ENCODE measurements at regions of chr6 and their contacts with region 1.

Region 1: DNA sequence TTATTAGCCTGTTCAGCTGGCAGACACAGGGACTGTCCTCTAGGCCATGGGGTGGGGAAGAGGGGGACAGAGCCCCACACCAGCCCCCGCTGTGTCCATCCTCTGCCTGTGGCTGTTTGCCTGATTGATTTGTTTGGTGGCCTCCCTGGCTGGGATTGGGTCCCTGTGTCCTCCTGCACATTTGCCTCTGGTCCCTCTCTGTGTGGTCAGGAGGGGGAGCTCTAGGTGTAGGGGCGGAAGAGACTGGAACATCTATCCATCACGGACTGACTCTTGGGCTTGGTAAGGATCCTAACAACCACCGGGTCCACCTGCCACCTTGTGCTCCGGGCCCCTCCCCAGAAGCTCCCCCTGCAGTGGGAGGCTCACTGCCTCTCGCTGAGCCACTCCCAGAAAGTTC is 38.4 kb upstream of the CCDC167 start:
- DNase-seq: peak; percentile 63
- ATAC-seq: peak; percentile 56
- H3K4me3 Mint-ChIP-seq: peak overlapping the region; percentile 8; the same call in 1 of the 2 replicates
- H3K27ac Mint-ChIP-seq: no peak overlapping the region
- H3K4me1 Mint-ChIP-seq: peaks cover 37% of the 10 kb centered on the region
- H3K27me3 Mint-ChIP-seq: peaks cover 59% of the 10 kb centered on the region
- CTCF ChIP-seq: 0 out of 2 replicates have a peak, but pooled peaks have one; percentile 20

Region 2: DNA sequence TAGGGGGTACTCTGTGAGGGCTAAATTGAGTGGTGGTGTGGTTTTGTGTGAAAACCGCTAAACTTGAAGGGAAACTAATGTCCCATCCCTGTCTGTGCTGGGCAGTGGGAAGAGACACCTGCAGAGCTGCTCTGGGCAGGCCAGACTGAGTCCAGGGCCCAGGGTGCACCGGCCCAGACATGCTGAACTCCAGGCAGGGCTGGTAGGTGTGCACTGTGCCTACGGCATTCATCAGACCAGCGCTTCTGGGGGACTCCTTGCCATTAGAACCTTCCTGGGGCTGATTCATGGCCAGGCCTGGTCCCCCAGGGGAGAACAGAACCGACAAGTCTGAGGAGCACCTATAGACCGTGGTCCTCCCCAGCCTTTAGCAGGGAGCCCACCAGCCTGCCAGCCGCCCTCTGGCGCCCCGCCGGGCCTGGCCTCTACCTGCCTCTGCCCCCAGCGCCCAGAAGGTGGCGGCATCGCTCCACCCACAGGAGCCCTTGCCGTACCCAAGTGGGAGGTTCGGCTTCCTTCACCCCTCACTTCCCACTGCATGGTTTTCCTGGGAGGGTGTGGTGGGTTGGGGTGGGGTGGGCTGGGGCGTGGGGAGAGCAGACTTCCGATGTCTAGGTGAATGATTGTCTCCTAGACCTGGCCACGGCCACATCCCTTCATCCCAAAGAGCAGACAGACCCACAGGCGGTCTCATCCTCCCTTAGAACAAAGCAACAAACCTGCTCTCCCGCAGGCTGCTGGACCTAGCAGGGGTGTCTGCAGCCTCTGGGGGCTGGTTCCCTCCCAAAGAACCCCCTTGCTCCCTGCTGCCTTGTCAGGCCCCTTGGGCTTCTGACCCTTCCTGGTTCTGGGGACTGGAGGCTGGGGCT is 54.0 kb before region 1 on chr6:
- CTCF ChIA-PET with region 1: interaction called, 20 read pairs
- POLR2A ChIA-PET with region 1: no interaction called
- DNase-seq: peak; percentile 82
- ATAC-seq: peak; percentile 78
- H3K4me3 Mint-ChIP-seq: no peak overlapping the region
- H3K27ac Mint-ChIP-seq: no peak overlapping the region
- H3K4me1 Mint-ChIP-seq: peaks cover 21% of the 10 kb centered on the region
- H3K27me3 Mint-ChIP-seq: no peaks in the 10 kb centered on the region
- CTCF ChIP-seq: peak; percentile 72

Region 3: DNA sequence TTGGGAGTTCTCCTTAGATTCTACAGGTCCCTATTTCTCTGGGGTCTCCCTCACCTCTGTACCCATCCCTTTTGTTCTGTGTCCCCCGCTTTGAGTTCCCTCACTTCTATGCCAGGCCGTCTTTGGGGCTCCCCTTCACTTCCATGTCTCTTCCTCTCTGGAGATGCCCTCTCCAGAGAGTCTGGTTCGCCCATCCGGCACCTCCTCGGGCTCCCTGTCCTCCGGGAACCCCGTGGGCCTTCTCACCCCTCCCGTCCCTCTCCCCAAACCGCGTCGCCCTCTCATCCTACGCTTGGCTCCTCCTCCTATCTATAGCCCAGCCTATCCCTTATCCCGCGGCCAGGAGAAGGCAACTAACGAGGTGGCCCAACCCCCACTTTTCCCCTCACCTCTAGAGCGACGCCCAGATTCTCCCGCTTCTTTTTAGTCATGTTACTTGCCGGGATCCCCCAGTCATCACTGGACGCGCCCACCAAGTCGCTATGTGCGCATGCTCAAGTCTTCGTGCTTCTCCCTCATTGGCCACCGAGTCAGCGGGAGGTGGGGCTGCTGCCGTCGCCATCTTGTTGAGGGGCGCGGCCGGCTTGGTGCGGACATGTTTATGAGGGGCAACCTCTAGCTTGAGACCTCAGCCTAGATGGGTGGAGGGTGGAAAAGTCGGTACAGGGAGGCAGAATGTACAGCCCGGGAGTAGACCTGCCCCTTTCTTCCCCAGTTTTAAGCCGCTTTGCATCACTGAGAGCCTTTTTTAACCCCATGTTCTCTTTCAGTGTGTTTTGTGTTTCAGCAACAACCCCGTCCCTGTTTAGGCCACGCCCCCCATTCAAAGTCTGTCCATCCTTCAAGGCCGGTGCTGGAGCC is 38.4 kb before region 1 on chr6 and contains the start of gene CCDC167:
- CTCF ChIA-PET with region 1: interaction called, 22 read pairs
- POLR2A ChIA-PET with region 1: interaction called, 4 read pairs
- DNase-seq: peak; percentile 100
- ATAC-seq: peak; percentile 96
- H3K4me3 Mint-ChIP-seq: peak within 1 kb of the TSS; percentile 93
- H3K27ac Mint-ChIP-seq: peak within 1 kb of the TSS; percentile 94
- H3K4me1 Mint-ChIP-seq: peaks cover 38% of the 10 kb centered on the region
- H3K27me3 Mint-ChIP-seq: peaks cover 11% of the 10 kb centered on the region
- CTCF ChIP-seq: no peak
- total RNA-seq, gene CCDC167: 19.1 to 21.6 TPM (median 19.9 TPM) in 3 replicates

Region 4: GRCh38 chr6:37525460-37526357 is 12.4 kb before region 1 on chr6:
- CTCF ChIA-PET with region 1: interaction called, 25 read pairs
- POLR2A ChIA-PET with region 1: no interaction called
- DNase-seq: peak; percentile 64
- ATAC-seq: peak; percentile 71
- H3K4me3 Mint-ChIP-seq: no peak overlapping the region
- H3K27ac Mint-ChIP-seq: no peak overlapping the region
- H3K4me1 Mint-ChIP-seq: peaks cover 6% of the 10 kb centered on the region
- H3K27me3 Mint-ChIP-seq: no peaks in the 10 kb centered on the region; the same call in none of the 2 replicates
- CTCF ChIP-seq: no peak

Region 5: DNA sequence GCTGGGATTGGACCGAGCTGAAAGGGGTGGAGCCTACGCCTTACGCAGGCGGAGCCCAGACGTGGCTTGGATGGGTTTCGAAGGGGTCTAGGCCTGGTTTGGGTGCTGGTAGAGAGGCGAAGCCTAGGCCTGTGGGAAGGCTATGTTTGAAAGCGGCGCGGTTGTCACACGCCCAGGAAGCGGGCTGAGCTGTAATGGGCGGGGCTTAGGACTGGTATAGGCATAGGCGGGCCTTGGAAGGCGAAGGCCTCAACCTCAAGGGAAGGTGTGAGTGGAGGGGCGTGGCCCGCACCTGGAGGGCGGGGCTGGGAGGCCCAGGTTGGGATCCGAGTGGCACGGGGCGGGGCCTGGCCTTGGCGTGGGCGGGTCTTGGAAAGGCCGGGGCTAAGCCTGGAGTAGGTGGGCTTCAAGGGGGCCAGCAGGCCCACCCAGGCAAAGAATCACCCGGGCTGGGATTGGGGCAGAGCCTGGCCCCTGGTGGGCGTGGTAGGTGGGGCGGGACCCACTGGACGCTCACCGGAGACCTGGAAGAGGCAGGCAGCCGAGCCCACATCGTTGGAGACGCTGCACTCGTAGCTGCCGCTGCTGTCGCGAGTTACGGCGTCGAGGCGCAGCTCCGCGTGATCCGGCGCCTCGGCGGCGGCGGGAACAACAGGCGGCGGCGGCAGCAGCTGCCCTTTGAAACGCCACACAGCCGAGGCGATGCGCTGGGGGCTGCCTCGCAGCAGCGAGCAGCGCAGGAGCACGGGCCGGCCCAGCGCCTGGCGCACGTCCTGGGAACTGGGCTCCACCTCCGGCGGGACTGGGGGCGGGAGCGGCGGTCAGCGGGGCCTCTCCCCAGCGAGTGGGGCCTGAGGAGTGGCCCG is 110.6 kb after region 1 on chr6:
- CTCF ChIA-PET with region 1: interaction called, 11 read pairs
- POLR2A ChIA-PET with region 1: no interaction called
- DNase-seq: peak; percentile 99
- ATAC-seq: peak; percentile 89
- H3K4me3 Mint-ChIP-seq: peak overlapping the region; percentile 58
- H3K27ac Mint-ChIP-seq: no peak overlapping the region
- H3K4me1 Mint-ChIP-seq: peaks cover 18% of the 10 kb centered on the region
- H3K27me3 Mint-ChIP-seq: peaks cover 72% of the 10 kb centered on the region
- CTCF ChIP-seq: no peak